Testis (tissue), 5 donors: ENCODE measurements at regions of chr16 and their contacts with region 1.

Region 1: DNA sequence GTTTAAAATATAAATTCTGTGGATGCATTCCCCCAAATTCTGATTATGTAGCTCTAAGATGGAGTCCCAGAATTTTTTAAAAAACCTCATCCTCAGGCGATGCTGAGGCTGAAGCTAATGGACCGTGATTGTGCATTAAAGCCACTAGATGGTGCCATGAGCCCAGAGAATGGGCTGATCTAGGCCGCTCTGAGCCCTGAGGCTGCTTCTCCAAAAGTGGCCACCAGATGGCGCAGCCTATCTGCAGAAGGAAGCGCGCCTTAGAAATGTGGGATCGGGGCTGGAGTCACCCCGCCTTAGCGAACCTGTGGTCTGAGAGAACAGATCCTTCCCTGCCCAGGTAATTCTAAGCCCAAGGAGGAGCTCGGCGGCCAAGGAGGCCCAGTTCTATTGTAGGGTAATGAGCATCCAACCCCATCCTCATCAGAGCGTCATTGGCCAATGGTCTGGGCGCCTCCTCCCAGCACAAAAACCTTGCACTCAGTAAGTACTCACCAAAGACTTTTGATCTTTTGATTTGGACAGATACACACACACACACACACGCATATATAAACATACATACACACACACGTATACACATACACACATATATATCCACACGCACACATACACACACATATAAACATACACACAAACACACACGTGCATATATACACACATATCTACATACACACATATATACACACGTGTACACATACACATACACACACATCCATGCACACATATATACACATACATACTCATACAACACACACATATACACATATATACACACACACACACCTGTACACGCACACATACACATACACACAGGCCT is 13.7 kb upstream of the MMP2 start:
- DNase-seq: peak; percentile 97
- H3K4me3 ChIP-seq: no peak overlapping the region
- H3K27ac ChIP-seq: no peak overlapping the region
- H3K4me1 ChIP-seq: no peaks in the 10 kb centered on the region
- H3K27me3 ChIP-seq: no peaks in the 10 kb centered on the region
- CTCF ChIP-seq: peak; percentile 99 to 100 (median 100)
- POLR2A ChIP-seq: no peak

Region 2: DNA sequence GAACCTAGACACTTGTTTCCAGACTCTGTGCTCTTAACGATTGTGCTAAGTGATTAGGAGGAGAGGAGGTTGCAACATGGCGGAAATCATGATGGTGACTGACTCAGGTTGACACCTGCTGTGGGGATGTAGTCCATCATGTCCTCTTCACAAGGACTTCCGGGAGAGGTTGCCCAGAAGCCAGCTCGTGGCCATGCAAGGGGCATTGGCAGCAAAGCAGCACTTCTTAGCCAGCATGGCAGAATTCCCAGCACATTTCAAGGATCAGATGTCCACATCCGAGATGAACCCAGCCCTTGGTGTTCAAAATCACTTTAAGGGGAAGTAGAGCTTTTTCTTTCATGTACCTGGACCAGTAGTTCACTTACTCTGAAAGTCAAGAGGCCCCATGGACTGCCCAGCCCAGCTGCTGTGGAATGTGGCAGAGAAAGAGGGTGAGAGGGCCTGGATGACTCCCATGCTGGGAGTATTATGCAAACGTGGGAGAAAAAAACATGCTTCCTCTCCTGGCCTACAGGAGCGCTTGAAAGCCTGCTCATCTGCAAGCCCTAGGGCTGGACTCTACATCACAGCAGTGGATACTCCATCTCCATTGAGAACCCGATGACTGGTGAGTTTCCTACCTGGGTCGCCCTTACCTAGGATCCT is 75.7 kb before region 1 on chr16:
- intact Hi-C with region 1: no loop called
- DNase-seq: no peak
- H3K4me3 ChIP-seq: no peak overlapping the region
- H3K27ac ChIP-seq: no peak overlapping the region
- H3K4me1 ChIP-seq: no peaks in the 10 kb centered on the region
- H3K27me3 ChIP-seq: no peaks in the 10 kb centered on the region
- CTCF ChIP-seq: no peak
- POLR2A ChIP-seq: no peak

Region 3: DNA sequence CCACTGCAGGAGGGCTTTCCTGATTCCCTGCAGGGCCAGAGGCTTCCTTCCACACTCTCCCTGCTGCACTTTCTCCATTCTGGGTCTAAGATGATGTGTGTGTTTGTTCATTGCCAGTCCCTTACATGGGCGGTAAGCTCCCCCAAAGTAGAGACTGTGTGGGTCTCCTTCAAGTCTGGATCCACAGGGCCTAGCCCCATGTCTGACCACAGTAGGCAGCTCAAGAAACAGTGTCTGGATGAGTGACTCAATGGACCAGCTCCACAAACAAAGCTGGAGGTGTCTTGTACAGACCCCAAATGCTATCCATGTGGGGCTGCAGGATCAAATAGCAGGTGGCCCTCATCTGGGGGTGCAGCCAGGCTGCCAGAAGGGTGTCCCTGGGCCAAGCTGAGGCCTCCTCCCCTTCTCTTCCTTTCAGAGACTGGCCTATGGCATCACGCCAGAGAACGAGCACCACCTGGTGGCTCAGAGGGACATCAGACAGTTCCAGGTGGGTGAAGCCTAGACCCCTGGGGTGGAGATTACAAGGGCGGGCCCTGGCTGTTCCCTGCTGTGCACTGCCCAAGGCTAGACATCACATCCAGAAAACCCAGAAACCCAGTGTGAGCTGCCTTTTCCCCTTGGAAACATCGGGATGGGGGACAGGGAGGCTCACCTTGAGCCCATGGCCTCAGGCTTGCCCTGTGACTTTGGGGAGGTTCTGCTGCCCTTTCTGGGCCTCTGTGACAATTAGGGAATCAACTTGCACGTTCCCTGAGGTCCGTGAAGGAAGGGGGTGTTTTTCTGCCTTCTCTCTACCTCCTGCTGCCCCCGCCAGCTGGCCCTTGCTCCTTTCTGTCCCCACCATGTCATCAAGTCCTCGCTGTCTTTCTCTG is 236.4 kb after region 1 on chr16:
- intact Hi-C with region 1: loop called (anchors 5 kb)
- DNase-seq: peak; percentile 61
- H3K4me3 ChIP-seq: no peak overlapping the region
- H3K27ac ChIP-seq: no peak overlapping the region
- H3K4me1 ChIP-seq: no peaks in the 10 kb centered on the region
- H3K27me3 ChIP-seq: no peaks in the 10 kb centered on the region
- CTCF ChIP-seq: peak; percentile 51 to 58 (median 56)
- POLR2A ChIP-seq: no peak